HAP-1 (cell line): ENCODE measurements at regions of chr7 and their contacts with region 1.

Region 1: GRCh38 chr7:126803060-126803665 is 449.6 kb downstream of the GRM8 start:
- DNase-seq: peak; percentile 67 to 74
- H3K4me3 ChIP-seq: no peak overlapping the region
- H3K4me1 ChIP-seq: no peaks in the 10 kb centered on the region
- H3K27me3 ChIP-seq: no peaks in the 10 kb centered on the region; the same call in 1 of the 2 replicates

Region 2: GRCh38 chr7:125695626-125696025 is 1107.5 kb before region 1 on chr7:
- in situ Hi-C with region 1: no loop called
- DNase-seq: no peak
- H3K4me3 ChIP-seq: no peak overlapping the region
- H3K4me1 ChIP-seq: no peaks in the 10 kb centered on the region
- H3K27me3 ChIP-seq: no peaks in the 10 kb centered on the region

Region 3: DNA sequence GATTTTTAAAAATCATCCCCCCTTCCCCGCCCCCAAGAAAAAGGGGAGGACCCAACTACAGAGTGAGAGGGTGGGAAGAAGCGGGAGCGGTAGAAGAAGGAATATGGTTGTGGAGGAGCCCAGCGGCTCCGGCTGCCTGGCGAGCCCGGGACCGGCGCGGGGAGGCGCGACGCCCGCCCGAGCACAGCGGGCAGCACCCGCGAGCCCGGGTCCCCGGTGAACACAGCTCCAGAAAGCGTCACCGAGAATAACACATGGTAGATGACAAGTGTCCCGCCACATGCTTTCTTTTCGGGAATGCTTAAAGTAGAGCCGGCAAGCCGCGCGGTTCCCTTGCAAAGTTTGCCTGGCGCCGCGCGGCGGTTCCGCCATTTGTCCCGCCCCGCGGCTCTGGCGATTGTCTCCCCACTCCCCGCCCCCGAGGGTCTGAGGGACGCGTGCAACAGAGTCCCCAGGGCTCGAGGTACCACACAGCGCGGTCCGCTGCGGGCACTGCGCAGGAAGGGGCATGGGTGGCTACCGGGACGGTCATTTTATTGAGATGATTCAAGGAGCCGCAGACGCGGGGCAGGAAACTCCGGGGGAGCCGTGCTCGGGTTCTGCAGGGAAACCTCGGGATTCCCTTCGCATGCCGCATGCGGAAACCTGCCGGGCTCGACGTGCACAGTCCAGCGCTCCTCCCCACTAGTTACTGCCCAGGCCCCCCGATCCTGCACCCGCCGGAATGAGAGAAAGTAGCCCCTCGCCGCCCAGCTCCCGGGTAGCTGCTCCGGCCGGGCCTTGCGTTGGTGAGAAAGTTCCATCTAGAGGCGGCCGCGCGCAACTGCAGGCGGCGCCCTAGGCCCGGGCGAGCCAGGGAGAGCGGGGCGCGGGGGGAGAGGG is 450.4 kb after region 1 on chr7:
- in situ Hi-C with region 1: loop called (anchors 25 kb)
- DNase-seq: peak; percentile 73 to 83
- H3K4me3 ChIP-seq: peak overlapping the region; percentile 62
- H3K4me1 ChIP-seq: no peaks in the 10 kb centered on the region
- H3K27me3 ChIP-seq: peaks cover 23% of the 10 kb centered on the region

Region 4: DNA sequence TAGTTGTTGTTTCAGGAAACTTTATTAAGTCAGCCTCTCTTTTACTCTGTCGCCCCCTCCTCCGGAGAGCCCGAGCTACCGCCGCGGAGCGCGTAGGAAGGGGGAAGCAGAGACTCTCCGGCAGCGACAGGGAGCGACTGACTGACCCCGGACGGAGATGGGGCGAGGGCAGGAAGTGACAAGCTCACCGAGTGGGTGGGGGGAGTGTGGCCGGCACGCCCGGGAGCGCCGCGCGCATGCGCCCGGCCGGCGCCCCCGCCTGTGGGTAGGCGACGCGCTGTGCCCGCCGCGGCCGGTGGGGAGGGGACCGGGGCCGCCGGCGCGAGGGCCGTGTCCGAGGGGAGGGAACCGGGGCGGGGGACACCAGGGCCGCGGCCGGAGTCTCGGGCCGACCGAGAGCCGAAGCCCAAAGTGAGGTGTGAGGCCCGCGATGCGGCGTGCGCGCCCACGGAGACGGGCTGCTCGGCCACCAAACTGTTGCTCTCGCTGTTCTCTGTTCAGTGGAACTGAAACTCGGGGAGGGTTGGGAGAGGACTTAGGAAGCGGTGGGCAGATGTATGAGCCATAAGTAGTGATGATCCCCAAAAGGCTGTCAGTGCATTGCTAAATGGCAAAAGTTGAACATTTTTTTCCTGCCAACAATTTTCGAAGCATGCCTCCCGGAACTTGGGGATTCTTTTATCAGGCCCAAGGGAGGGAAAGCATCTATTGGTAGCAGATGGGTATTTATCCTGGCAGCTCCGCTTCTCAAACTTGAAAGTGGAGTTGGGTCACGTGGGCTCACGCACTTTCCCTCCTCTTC is 589.6 kb after region 1 on chr7 and contains the start of gene ZNF800:
- in situ Hi-C with region 1: no loop called
- DNase-seq: peak; percentile 86 to 91
- H3K4me3 ChIP-seq: peak within 1 kb of the TSS; percentile 92
- H3K4me1 ChIP-seq: peaks cover 11% of the 10 kb centered on the region
- H3K27me3 ChIP-seq: no peaks in the 10 kb centered on the region

Region 5: GRCh38 chr7:127474457-127474856 is 671.3 kb after region 1 on chr7:
- in situ Hi-C with region 1: loop called (anchors 25 kb)
- DNase-seq: no peak
- H3K4me3 ChIP-seq: no peak overlapping the region
- H3K4me1 ChIP-seq: no peaks in the 10 kb centered on the region; the same call in 1 of the 2 replicates
- H3K27me3 ChIP-seq: no peaks in the 10 kb centered on the region